ENCODE measurements at regions of chr7 and their contacts with region 1.

Region 1: GRCh38 chr7:116984917-116985316 is 31.6 kb downstream of the ST7 start:
- DNase-seq: no peak
- H3K4me3 ChIP-seq: no peak overlapping the region
- H3K27ac ChIP-seq: no peak overlapping the region
- H3K4me1 ChIP-seq: no peaks in the 10 kb centered on the region; a peak in 1 of 7 replicates
- H3K27me3 ChIP-seq: no peaks in the 10 kb centered on the region
- CTCF ChIP-seq: peak in 2 of 3 experiments; percentile 36 to 50; a peak in 2 of 4 replicates
- EP300 ChIP-seq: no peak
- POLR2A ChIP-seq: no peak
- RAD21 ChIP-seq: peak; percentile 44 to 54

Region 2: DNA sequence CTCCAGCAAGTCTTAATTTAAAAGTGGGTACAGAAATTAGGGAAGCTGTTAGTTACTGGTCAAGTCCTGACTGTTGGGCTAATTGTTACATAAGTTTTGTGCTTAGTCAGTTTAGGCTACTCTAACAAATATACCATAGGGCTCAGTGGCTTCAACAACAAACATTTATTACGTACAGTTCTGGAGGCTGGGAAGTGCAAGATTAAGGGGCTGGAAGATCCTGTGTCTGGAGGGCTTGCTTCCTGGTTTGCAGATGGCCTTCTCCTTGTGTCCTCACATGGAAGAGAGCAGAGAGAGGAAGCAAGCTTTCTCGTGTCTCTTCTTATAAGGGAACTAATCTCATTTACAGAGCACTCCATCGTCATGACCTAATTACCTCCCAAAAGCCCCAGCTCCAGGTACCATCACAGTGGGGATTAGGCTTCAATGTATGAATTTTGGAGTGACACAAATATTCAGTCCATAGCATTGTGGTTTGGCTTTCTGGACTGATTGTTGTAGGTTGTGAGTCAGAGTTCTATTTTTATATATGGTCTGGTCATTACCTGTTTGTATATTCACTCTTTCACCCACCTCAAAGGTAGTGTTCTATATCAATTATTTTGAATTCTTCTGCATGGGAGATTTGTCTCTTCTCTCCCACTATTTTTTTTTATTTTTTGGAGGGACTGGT is 14.5 kb before region 1 on chr7:
- CTCF ChIA-PET with region 1: interaction called, 50 read pairs
- POLR2A ChIA-PET with region 1: interaction called, 4 read pairs
- DNase-seq: no peak
- H3K4me3 ChIP-seq: no peak overlapping the region
- H3K27ac ChIP-seq: peak overlapping the region; percentile 51; the same call in 1 of the 2 replicates
- H3K4me1 ChIP-seq: peaks cover 4 to 18% (median 12%) of the 10 kb centered on the region in 4 experiments; a peak in 4 of 7 replicates
- H3K27me3 ChIP-seq: no peaks in the 10 kb centered on the region
- CTCF ChIP-seq: no peak
- EP300 ChIP-seq: no peak
- POLR2A ChIP-seq: no peak
- RAD21 ChIP-seq: no peak

Region 3: DNA sequence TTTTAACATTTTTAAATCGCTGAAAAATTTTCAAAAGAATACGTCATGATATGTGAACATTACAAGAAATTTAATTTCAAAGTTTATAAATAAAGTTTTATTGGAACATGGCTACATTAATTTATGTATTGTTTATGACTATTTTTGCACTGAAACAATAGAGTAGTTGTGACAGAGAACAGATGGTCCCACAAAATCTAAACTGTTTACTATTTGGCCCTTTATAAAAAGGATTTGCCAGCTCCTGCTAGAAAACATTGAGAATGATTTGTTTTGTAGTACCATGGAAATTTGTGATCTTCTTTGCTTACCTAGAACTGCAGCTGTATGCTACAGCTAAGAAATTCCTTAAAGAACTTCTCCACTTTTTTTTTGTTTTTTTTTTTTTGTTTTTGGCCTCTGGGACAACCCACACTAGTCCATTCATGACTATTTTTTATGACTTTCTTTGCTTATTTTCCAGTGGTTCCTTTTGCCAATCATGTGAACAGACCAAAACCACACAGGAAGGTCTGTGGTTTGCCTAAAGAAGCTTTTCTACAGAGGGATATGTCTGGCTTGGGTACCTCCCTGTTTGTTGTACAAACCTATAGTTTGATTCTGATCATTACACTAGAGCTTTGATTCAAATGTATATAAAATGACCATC is 24.1 kb after region 1 on chr7:
- CTCF ChIA-PET with region 1: interaction called, 32 read pairs
- POLR2A ChIA-PET with region 1: no interaction called
- DNase-seq: no peak
- H3K4me3 ChIP-seq: no peak overlapping the region
- H3K27ac ChIP-seq: no peak overlapping the region
- H3K4me1 ChIP-seq: no peaks in the 10 kb centered on the region
- H3K27me3 ChIP-seq: no peaks in the 10 kb centered on the region
- CTCF ChIP-seq: no peak
- EP300 ChIP-seq: no peak
- POLR2A ChIP-seq: no peak
- RAD21 ChIP-seq: no peak

Region 4: DNA sequence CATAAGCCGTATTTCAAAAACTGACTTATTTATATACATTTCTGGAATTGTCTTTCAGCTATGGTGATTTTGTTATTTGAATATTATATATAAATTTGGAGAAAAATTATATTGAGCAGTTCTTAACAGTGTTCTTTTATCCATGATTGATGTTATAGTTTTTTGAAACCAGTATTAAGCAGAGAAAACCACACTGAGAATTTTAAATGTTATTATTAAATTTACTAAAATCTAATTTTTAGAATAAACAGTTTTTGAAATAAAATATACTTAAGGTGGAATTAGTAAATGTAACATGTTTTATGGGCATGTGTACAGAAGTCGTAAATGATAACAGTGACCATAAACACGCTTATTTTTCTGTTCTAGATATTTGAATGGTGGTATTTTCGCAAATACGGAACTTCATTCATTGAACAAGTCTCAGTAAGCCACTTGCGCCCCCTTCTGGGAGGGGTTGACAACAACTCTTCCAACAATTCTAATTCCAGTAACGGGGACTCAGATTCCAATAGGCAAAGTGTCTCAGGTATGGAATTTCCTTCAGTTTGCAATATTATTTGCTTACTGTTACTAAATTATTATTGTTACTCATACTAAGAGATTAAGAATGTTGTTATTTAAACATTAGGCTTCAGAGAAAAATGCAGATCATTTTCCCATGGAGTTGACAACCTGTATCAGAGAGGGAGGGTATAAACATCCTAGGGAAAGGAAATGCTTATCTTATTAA is 134.4 kb after region 1 on chr7:
- CTCF ChIA-PET with region 1: interaction called, 21 read pairs
- POLR2A ChIA-PET with region 1: no interaction called
- DNase-seq: peak; percentile 19 to 89
- H3K4me3 ChIP-seq: peak overlapping the region in 1 of 4 experiments; percentile 43; a peak in 2 of 8 replicates
- H3K27ac ChIP-seq: no peak overlapping the region
- H3K4me1 ChIP-seq: peaks cover 0 to 5% (median 2%) of the 10 kb centered on the region in 4 experiments; a peak in 2 of 7 replicates
- H3K27me3 ChIP-seq: no peaks in the 10 kb centered on the region
- CTCF ChIP-seq: peak in 2 of 3 experiments; percentile 76 to 84; a peak in 3 of 4 replicates
- EP300 ChIP-seq: no peak
- POLR2A ChIP-seq: no peak
- RAD21 ChIP-seq: peak; percentile 94

Measured in H1 (cell line).